Ascending aorta (tissue), 2 donors: ENCODE measurements at regions of chr4 and their contacts with region 1.

Region 1: GRCh38 chr4:168636506-168637196 is 139.8 kb downstream of the PALLD start:
- DNase-seq: no peak
- H3K4me3 ChIP-seq: peak overlapping the region in 1 of 2 donors; percentile 8
- H3K27ac ChIP-seq: peak overlapping the region; percentile 81 to 89
- H3K4me1 ChIP-seq: peaks cover 4 to 30% of the 10 kb centered on the region in 2 donors
- H3K27me3 ChIP-seq: no peaks in the 10 kb centered on the region
- CTCF ChIP-seq: no peak

Region 2: GRCh38 chr4:168383510-168383909 is 253.1 kb before region 1 on chr4:
- intact Hi-C with region 1: no loop called
- DNase-seq: no peak
- H3K4me3 ChIP-seq: no peak overlapping the region
- H3K27ac ChIP-seq: no peak overlapping the region
- H3K4me1 ChIP-seq: no peaks in the 10 kb centered on the region
- H3K27me3 ChIP-seq: no peaks in the 10 kb centered on the region
- CTCF ChIP-seq: no peak

Region 3: GRCh38 chr4:168656055-168656660 is 19.5 kb after region 1 on chr4:
- intact Hi-C with region 1: loop called (anchors 2 kb)
- DNase-seq: no peak
- H3K4me3 ChIP-seq: no peak overlapping the region
- H3K27ac ChIP-seq: no peak overlapping the region
- H3K4me1 ChIP-seq: peaks cover 0 to 8% of the 10 kb centered on the region in 2 donors
- H3K27me3 ChIP-seq: no peaks in the 10 kb centered on the region
- CTCF ChIP-seq: no peak